Dorsolateral prefrontal cortex (tissue), 120 donors: ENCODE measurements at regions of chr22 and their contacts with region 1.

Region 1: GRCh38 chr22:23716811-23717801 is 26.3 kb downstream of the RGL4 start:
- DNase-seq: peak; percentile 83 to 93 (median 88)
- H3K4me3 ChIP-seq: peak overlapping the region; percentile 63 to 100 (median 95)
- H3K27ac ChIP-seq: peak overlapping the region in 57 of 59 donors; percentile 17 to 88 (median 73)
- H3K27me3 ChIP-seq: no peaks in the 10 kb centered on the region
- CTCF ChIP-seq: peak in 21 of 56 donors; percentile 6 to 45 (median 17)

Region 2: GRCh38 chr22:23750714-23751440 is 33.8 kb after region 1 on chr22 and contains the start of gene ZNF70:
- intact Hi-C with region 1: loop called (anchors 5 kb)
- DNase-seq: peak; percentile 60 to 91 (median 81)
- H3K4me3 ChIP-seq: peak within 1 kb of the TSS; percentile 58 to 91 (median 80)
- H3K27ac ChIP-seq: peak within 1 kb of the TSS in 58 of 59 donors; percentile 31 to 94 (median 86)
- H3K27me3 ChIP-seq: no peaks in the 10 kb centered on the region
- CTCF ChIP-seq: peak in 12 of 56 donors; percentile 7 to 35 (median 26)
- total RNA-seq, gene ZNF70: 4.8 to 12.5 (median 7.4) TPM